Caco-2 (cell line): ENCODE measurements at regions of chr7 and their contacts with region 1.

Region 1: GRCh38 chr7:135170274-135170997 is at the start of gene CYREN:
- DNase-seq: peak; percentile 95 to 97
- H3K4me3 ChIP-seq: peak within 1 kb of the TSS; percentile 98
- H3K4me3 Mint-ChIP-seq: peak within 1 kb of the TSS; percentile 85
- H3K27ac Mint-ChIP-seq: peak within 1 kb of the TSS; percentile 94
- H3K4me1 ChIP-seq: peaks cover 12% of the 10 kb centered on the region; the same call in 1 of the 2 replicates
- H3K4me1 Mint-ChIP-seq: peaks cover 24% of the 10 kb centered on the region
- H3K27me3 ChIP-seq: no peaks in the 10 kb centered on the region
- H3K27me3 Mint-ChIP-seq: no peaks in the 10 kb centered on the region
- CTCF ChIP-seq: peak; percentile 59 to 84
- total RNA-seq, gene CYREN: 60.9 and 62.6 TPM in 2 replicates

Region 2: GRCh38 chr7:134632937-134633540 is 537.4 kb before region 1 on chr7:
- CTCF ChIA-PET with region 1: no interaction called
- POLR2A ChIA-PET with region 1: no interaction called
- intact Hi-C with region 1: loop called (anchors 2 kb)
- DNase-seq: peak in 1 of 2 experiments; percentile 49
- H3K4me3 ChIP-seq: no peak overlapping the region
- H3K4me3 Mint-ChIP-seq: no peak overlapping the region
- H3K27ac Mint-ChIP-seq: no peak overlapping the region
- H3K4me1 ChIP-seq: no peaks in the 10 kb centered on the region
- H3K4me1 Mint-ChIP-seq: no peaks in the 10 kb centered on the region
- H3K27me3 ChIP-seq: no peaks in the 10 kb centered on the region; the same call in 1 of the 2 replicates
- H3K27me3 Mint-ChIP-seq: peaks cover 6% of the 10 kb centered on the region
- CTCF ChIP-seq: peak; percentile 63 to 65

Region 3: DNA sequence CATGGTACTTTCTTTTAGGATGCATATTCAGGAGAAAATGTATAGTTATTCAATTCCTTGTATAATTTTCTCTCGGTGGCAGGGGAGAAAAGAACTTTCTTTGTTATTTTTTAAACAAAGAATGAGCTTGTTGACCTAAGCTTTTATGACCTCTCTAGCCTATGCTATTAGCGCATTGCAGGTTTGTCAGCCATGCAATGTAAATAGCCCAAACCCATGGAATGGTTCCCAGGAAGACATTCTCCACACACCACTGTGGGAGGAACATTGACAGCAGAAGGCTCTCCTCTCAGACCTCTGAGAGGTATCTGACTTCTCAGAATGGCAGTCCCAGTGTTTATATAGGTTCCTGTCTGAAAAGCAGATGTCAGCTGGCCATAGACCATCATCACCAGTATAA is 203.8 kb before region 1 on chr7:
- CTCF ChIA-PET with region 1: no interaction called
- POLR2A ChIA-PET with region 1: no interaction called
- intact Hi-C with region 1: loop called (anchors 5 kb)
- DNase-seq: peak; percentile 38 to 45
- H3K4me3 ChIP-seq: no peak overlapping the region
- H3K4me3 Mint-ChIP-seq: no peak overlapping the region
- H3K27ac Mint-ChIP-seq: peak overlapping the region; percentile 12
- H3K4me1 ChIP-seq: no peaks in the 10 kb centered on the region; the same call in 1 of the 2 replicates
- H3K4me1 Mint-ChIP-seq: peaks cover 8% of the 10 kb centered on the region
- H3K27me3 ChIP-seq: no peaks in the 10 kb centered on the region
- H3K27me3 Mint-ChIP-seq: no peaks in the 10 kb centered on the region
- CTCF ChIP-seq: no peak

Region 4: DNA sequence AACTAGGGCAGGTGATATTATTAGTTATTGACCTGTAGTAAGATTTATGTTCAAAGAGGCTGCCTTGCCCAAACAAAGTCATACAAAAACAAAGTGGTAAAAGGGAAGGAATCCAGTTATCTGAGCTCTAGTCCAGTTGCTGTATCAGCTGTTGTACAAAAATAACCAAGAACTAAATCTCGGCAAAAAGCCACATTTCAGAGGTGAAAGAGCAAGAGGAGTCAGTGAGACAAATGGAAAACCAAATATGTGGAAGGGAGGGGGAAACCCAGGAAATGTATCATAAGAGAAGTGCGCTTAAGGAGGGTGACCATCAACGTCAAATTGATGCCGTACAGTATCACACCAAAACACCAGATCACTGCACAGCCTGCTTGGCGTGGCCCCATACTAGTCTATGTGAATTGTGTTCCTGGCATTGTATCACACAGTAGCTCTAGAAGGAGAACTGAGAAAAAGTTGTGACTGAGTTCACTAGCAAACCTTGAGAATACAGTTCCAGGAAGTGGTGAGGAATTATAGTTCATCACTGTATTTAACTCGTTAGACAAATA is 177.7 kb before region 1 on chr7:
- CTCF ChIA-PET with region 1: interaction called, 3 read pairs
- POLR2A ChIA-PET with region 1: no interaction called
- intact Hi-C with region 1: loop called (anchors 1 kb)
- DNase-seq: no peak
- H3K4me3 ChIP-seq: no peak overlapping the region; the same call in 1 of the 2 replicates
- H3K4me3 Mint-ChIP-seq: peak overlapping the region; percentile 45
- H3K27ac Mint-ChIP-seq: peak overlapping the region; percentile 86
- H3K4me1 ChIP-seq: peaks cover 73% of the 10 kb centered on the region
- H3K4me1 Mint-ChIP-seq: peaks cover 46% of the 10 kb centered on the region
- H3K27me3 ChIP-seq: no peaks in the 10 kb centered on the region
- H3K27me3 Mint-ChIP-seq: no peaks in the 10 kb centered on the region
- CTCF ChIP-seq: no peak

Region 5: GRCh38 chr7:135211179-135211945 is 40.9 kb after region 1 on chr7 and contains the start of gene WDR91:
- CTCF ChIA-PET with region 1: no interaction called
- POLR2A ChIA-PET with region 1: no interaction called
- intact Hi-C with region 1: loop called (anchors 2 kb)
- DNase-seq: peak; percentile 94 to 95
- H3K4me3 ChIP-seq: peak within 1 kb of the TSS; percentile 86
- H3K4me3 Mint-ChIP-seq: peak within 1 kb of the TSS; percentile 95
- H3K27ac Mint-ChIP-seq: peak within 1 kb of the TSS; percentile 96
- H3K4me1 ChIP-seq: peaks cover 4% of the 10 kb centered on the region; the same call in 1 of the 2 replicates
- H3K4me1 Mint-ChIP-seq: peaks cover 9% of the 10 kb centered on the region
- H3K27me3 ChIP-seq: no peaks in the 10 kb centered on the region
- H3K27me3 Mint-ChIP-seq: no peaks in the 10 kb centered on the region
- CTCF ChIP-seq: no peak
- total RNA-seq, gene WDR91: 11.5 and 12.6 TPM in 2 replicates

Region 6: DNA sequence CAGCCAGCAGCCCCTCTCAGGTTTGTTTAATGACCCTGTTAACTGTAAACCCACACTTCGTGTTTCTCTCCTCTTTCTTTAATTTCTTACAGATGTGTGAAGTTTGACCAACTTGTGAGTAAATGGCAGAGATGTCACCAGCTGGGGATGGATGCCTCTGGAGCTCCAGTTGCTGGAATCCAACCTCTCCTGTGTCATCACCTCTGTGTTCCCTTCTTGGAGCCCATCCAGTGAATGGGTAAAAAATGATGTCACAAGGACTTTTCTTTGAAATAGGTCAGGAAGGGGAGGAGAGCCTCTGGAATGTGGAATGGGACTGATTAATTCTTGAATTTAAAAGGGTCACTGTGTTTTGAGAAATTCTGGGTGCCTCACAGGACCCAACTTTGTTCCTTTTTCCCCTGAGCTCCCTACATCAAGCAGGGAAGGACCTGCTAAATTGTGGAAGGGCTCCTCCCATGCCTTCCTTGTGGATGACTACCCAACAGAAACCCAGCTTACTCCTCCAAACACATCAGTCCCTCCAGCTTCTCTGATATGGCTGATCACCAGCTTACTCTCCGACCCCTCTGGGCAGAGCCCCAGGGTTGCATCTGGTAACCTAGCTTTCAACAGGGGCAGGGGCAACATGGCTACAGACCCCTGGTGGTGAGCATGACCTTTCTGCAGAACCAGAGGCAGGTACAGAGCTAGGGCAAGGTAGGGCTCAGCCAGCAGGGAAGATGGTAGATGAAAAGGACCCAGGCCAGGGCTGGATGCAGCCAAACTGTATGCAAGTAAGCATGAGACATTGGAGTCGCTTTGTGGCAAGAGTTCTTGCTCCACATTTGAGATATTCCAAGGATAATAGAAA is 130.7 kb after region 1 on chr7:
- CTCF ChIA-PET with region 1: no interaction called
- POLR2A ChIA-PET with region 1: no interaction called
- intact Hi-C with region 1: no loop called
- DNase-seq: no peak
- H3K4me3 ChIP-seq: no peak overlapping the region
- H3K4me3 Mint-ChIP-seq: no peak overlapping the region
- H3K27ac Mint-ChIP-seq: no peak overlapping the region
- H3K4me1 ChIP-seq: no peaks in the 10 kb centered on the region
- H3K4me1 Mint-ChIP-seq: no peaks in the 10 kb centered on the region
- H3K27me3 ChIP-seq: no peaks in the 10 kb centered on the region
- H3K27me3 Mint-ChIP-seq: peaks cover 13% of the 10 kb centered on the region
- CTCF ChIP-seq: no peak